Right cardiac atrium (tissue), 5 donors: ENCODE measurements at regions of chr17 and their contacts with region 1.

Region 1: GRCh38 chr17:54013072-54013471 is 190.3 kb downstream of the KIF2B start:
- DNase-seq: no peak
- ATAC-seq: no peak
- H3K4me3 ChIP-seq: no peak overlapping the region
- H3K27ac ChIP-seq: no peak overlapping the region
- H3K4me1 ChIP-seq: no peaks in the 10 kb centered on the region
- H3K27me3 ChIP-seq: no peaks in the 10 kb centered on the region

Region 2: DNA sequence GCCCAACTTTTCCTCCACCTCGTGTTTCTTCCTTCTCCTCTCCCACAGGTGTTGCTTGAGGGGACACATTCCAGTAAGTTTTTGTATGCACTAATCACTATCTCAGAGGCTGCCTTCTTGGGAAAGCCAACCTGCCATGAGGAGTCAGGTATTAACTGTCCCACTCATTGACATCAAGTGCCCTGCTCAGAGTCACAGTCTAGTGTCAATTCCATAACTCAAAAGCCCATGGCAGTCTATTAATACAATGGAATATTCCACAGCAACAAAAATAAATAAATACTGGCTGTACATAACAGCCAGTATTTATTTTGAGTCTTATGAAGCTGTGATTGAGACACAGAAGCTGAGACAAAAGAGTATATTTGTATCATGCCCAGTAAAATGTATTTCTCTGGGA is 216.4 kb before region 1 on chr17:
- intact Hi-C with region 1: no loop called
- DNase-seq: no peak
- ATAC-seq: no peak
- H3K4me3 ChIP-seq: no peak overlapping the region
- H3K27ac ChIP-seq: no peak overlapping the region
- H3K4me1 ChIP-seq: no peaks in the 10 kb centered on the region
- H3K27me3 ChIP-seq: no peaks in the 10 kb centered on the region

Region 3: DNA sequence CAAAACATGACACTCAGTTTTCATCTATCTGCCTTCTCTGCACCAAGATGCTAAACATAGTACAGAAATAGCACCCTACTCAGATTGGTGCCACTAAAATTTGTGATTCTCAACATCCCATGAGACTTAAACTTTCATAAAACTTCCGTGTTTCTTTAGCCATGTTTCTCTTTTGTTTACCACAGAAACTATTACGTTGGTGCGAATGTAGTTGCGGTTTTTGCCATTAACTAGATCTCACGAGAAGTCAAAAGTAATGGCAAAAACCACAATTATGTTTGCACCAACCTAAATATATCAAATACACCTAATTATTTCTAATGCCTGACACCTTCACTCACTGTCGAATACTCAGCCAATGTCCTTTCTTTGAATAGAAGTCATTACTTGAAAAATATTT is 70.8 kb after region 1 on chr17:
- intact Hi-C with region 1: loop called in 1 of 4 experiments (anchors 10 kb)
- DNase-seq: no peak
- ATAC-seq: no peak
- H3K4me3 ChIP-seq: no peak overlapping the region
- H3K27ac ChIP-seq: no peak overlapping the region
- H3K4me1 ChIP-seq: no peaks in the 10 kb centered on the region
- H3K27me3 ChIP-seq: no peaks in the 10 kb centered on the region